Ovary (tissue), 10 donors: ENCODE measurements at regions of chr15 and their contacts with region 1.

Region 1: DNA sequence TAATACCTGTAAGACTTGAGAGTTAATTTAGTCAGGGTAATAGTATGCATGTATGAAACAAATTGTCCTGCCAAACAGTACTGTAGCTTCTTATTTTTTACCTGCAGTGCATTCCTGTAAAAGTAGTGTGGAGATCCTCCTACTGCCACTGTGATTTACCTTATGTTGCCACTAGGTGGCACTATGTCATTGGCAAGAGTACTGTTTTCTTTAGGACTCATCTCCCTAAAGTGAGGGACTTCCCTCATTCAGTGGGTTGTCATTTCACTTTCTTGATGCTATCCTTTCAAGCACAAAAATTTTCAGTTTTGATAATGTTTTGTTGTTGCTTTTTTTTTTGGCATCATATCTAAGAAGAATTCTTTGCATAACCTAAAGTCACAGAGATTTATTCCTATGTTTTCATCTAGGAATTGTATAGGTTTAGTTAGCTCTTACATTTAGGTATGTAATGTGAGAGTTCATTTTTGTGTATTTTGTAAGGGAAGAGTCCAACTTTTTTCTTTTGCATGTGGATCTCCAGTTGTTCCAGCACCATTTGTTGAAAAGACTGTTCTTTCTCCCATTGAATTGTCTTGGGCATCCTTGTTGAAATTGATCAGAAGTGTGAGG is 105.7 kb downstream of the AKAP13 start:
- DNase-seq: peak in 3 of 5 donors; percentile 23 to 72 (median 36)
- H3K4me3 ChIP-seq: no peak overlapping the region
- H3K27ac ChIP-seq: no peak overlapping the region
- H3K4me1 ChIP-seq: no peaks in the 10 kb centered on the region
- H3K27me3 ChIP-seq: no peaks in the 10 kb centered on the region
- CTCF ChIP-seq: peak; percentile 61 to 74 (median 67)
- EP300 ChIP-seq: no peak
- POLR2A ChIP-seq: no peak

Region 2: DNA sequence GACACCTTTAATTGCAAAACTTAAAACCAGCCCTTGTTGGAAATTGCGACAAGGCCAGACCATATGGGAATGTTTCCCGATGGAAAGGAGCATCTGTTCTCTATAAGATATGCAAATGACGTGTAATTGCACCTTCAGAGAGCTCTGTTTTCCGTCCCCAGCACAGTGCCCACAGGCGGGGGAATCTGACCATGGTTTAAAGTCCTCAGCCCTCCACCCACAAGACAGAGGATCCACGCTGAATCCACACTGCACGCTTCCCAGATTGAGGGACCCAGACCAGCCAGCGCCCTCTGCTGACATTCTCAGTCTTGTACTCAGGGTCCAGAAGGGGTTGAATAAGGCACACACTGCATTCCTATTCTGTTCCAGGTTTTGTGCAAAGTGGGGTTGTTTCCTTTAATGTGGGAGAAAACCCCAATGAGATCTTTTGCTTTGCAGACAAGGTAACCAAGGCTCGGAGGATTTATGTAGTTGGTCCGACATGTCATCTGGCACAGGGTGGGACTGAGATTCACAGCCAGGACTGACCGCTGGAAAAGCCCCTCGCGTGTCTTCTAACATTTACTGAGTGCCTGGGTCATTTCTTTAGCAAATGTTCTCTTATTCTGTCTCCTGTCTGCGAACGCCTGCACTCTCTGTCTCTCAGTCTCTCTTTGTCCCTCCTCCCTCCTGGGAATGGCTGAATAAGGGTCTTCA is 345.5 kb after region 1 on chr15:
- intact Hi-C with region 1: loop called in 1 of 4 experiments (anchors 10 kb)
- DNase-seq: peak; percentile 69 to 82 (median 77)
- H3K4me3 ChIP-seq: no peak overlapping the region
- H3K27ac ChIP-seq: no peak overlapping the region
- H3K4me1 ChIP-seq: no peaks in the 10 kb centered on the region
- H3K27me3 ChIP-seq: no peaks in the 10 kb centered on the region
- CTCF ChIP-seq: peak; percentile 49 to 75 (median 52)
- EP300 ChIP-seq: no peak
- POLR2A ChIP-seq: no peak